Uterus (tissue), 4 donors: ENCODE measurements at regions of chr11 and their contacts with region 1.

Region 1: GRCh38 chr11:18395735-18396504 is 1.6 kb downstream of the LDHA start:
- DNase-seq: peak; percentile 98 to 99
- H3K4me3 ChIP-seq: peak overlapping the region; percentile 64 to 68
- H3K27ac ChIP-seq: peak overlapping the region; percentile 85 to 92
- H3K4me1 ChIP-seq: no peaks in the 10 kb centered on the region
- H3K27me3 ChIP-seq: no peaks in the 10 kb centered on the region
- CTCF ChIP-seq: peak in 1 of 4 experiments; percentile 16
- POLR2A ChIP-seq: peak; percentile 67 to 73

Region 2: GRCh38 chr11:18321980-18322711 is 73.8 kb before region 1 on chr11 and contains the starts of genes GTF2H1 and HPS5:
- intact Hi-C with region 1: loop called (anchors 5 kb)
- DNase-seq: peak; percentile 93 to 97
- H3K4me3 ChIP-seq: peak within 1 kb of the TSS; percentile 73 to 82
- H3K27ac ChIP-seq: peak within 1 kb of the TSS; percentile 96 to 99
- H3K4me1 ChIP-seq: peaks cover 8 to 19% of the 10 kb centered on the region in 2 donors
- H3K27me3 ChIP-seq: no peaks in the 10 kb centered on the region
- CTCF ChIP-seq: peak in 2 of 4 experiments; percentile 10 to 23
- POLR2A ChIP-seq: peak; percentile 65 to 78
- total RNA-seq, gene GTF2H1: 25.0 to 103 (median 50.7) TPM
- total RNA-seq, gene HPS5: 6.4 to 55.0 (median 35.9) TPM